Activated CD4-positive, alpha-beta T cell treated with anti-CD3 and anti-CD28 coated beads for 36 hours (primary cell): ENCODE measurements at regions of chr2 and their contacts with region 1.

Region 1: GRCh38 chr2:167028505-167028904 is 140.2 kb downstream of the XIRP2 start:
- DNase-seq: no peak
- ATAC-seq: no peak
- H3K4me3 Mint-ChIP-seq: no peak overlapping the region
- H3K27ac Mint-ChIP-seq: no peak overlapping the region
- H3K4me1 Mint-ChIP-seq: no peaks in the 10 kb centered on the region
- H3K27me3 Mint-ChIP-seq: no peaks in the 10 kb centered on the region

Region 2: GRCh38 chr2:167298017-167298416 is 269.5 kb after region 1 on chr2:
- CTCF ChIA-PET with region 1: no interaction called
- POLR2A ChIA-PET with region 1: no interaction called
- intact Hi-C with region 1: no loop called
- DNase-seq: no peak
- ATAC-seq: no peak
- H3K4me3 Mint-ChIP-seq: no peak overlapping the region
- H3K27ac Mint-ChIP-seq: no peak overlapping the region
- H3K4me1 Mint-ChIP-seq: peaks cover 13% of the 10 kb centered on the region
- H3K27me3 Mint-ChIP-seq: peaks cover 22% of the 10 kb centered on the region

Region 3: DNA sequence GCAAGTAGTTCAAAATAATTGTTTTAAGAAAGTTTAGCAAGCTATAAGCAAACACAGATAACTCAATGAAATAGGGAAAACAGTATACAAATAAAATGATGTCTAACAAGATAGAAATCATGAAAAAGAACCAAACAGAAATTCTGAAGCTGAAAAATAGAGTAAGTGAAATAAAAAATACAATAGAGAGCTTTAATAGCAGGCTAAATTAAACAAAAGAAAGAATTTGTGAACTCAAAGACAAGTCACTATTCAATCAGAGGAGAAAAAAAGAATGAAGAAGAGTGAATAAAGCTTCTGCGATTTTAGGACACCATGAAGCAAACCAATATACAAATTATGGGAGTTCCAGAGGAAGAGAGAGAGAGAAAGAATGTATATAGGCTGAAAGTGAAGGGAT is 642.1 kb after region 1 on chr2:
- CTCF ChIA-PET with region 1: no interaction called
- POLR2A ChIA-PET with region 1: no interaction called
- intact Hi-C with region 1: loop called in 1 of 2 experiments (anchors 10 kb)
- DNase-seq: no peak
- ATAC-seq: no peak
- H3K4me3 Mint-ChIP-seq: no peak overlapping the region
- H3K27ac Mint-ChIP-seq: no peak overlapping the region
- H3K4me1 Mint-ChIP-seq: no peaks in the 10 kb centered on the region
- H3K27me3 Mint-ChIP-seq: peaks cover 1% of the 10 kb centered on the region